Caco-2 (cell line): ENCODE measurements at regions of chr11 and their contacts with region 1.

Region 1: GRCh38 chr11:60615497-60615896 is 83.9 kb upstream of the MS4A8 start:
- DNase-seq: no peak
- H3K4me3 ChIP-seq: no peak overlapping the region
- H3K4me3 Mint-ChIP-seq: no peak overlapping the region
- H3K27ac Mint-ChIP-seq: no peak overlapping the region
- H3K4me1 ChIP-seq: no peaks in the 10 kb centered on the region
- H3K4me1 Mint-ChIP-seq: no peaks in the 10 kb centered on the region
- H3K27me3 ChIP-seq: no peaks in the 10 kb centered on the region
- H3K27me3 Mint-ChIP-seq: peaks cover 11% of the 10 kb centered on the region
- CTCF ChIP-seq: no peak

Region 2: DNA sequence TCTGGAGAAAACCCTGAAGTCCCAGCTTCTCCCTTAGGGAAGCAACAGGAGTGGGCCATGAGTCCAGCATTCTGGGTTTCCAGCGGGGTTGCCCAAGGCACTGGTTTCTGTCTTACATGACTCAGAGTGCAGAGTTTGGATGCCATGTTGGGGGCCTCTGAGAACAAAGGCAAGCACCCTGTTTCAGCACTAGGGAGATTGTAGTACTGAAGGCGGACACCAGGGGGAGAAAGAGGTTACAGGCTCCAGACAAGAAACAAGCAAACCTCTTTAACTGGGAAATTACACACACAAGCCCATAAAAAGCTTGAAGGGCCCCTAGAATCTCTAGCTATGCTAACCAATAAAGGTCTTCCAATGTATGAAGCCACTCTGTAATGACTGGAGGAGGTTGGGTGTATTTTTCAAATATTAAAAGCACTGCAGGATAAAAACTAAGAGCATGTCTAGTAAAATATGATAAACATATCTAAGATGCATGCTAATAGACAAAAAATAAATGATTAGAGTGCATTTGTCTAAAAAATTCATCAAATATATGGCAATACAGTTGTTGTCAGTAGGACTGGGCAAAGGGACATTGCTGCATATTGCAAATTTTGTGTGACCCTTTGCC is 281.4 kb before region 1 on chr11:
- CTCF ChIA-PET with region 1: interaction called, 6 read pairs
- POLR2A ChIA-PET with region 1: no interaction called
- intact Hi-C with region 1: loop called (anchors 1 kb)
- DNase-seq: peak; percentile 70 to 82
- H3K4me3 ChIP-seq: no peak overlapping the region
- H3K4me3 Mint-ChIP-seq: no peak overlapping the region
- H3K27ac Mint-ChIP-seq: no peak overlapping the region
- H3K4me1 ChIP-seq: no peaks in the 10 kb centered on the region
- H3K4me1 Mint-ChIP-seq: no peaks in the 10 kb centered on the region
- H3K27me3 ChIP-seq: no peaks in the 10 kb centered on the region
- H3K27me3 Mint-ChIP-seq: no peaks in the 10 kb centered on the region
- CTCF ChIP-seq: peak; percentile 81 to 85

Region 3: GRCh38 chr11:60345489-60345888 is 270.0 kb before region 1 on chr11:
- CTCF ChIA-PET with region 1: no interaction called
- POLR2A ChIA-PET with region 1: no interaction called
- intact Hi-C with region 1: loop called (anchors 5 kb)
- DNase-seq: peak in 1 of 2 experiments; percentile 33
- H3K4me3 ChIP-seq: no peak overlapping the region
- H3K4me3 Mint-ChIP-seq: no peak overlapping the region
- H3K27ac Mint-ChIP-seq: no peak overlapping the region
- H3K4me1 ChIP-seq: no peaks in the 10 kb centered on the region
- H3K4me1 Mint-ChIP-seq: no peaks in the 10 kb centered on the region
- H3K27me3 ChIP-seq: no peaks in the 10 kb centered on the region
- H3K27me3 Mint-ChIP-seq: no peaks in the 10 kb centered on the region
- CTCF ChIP-seq: peak; percentile 28 to 47

Region 4: DNA sequence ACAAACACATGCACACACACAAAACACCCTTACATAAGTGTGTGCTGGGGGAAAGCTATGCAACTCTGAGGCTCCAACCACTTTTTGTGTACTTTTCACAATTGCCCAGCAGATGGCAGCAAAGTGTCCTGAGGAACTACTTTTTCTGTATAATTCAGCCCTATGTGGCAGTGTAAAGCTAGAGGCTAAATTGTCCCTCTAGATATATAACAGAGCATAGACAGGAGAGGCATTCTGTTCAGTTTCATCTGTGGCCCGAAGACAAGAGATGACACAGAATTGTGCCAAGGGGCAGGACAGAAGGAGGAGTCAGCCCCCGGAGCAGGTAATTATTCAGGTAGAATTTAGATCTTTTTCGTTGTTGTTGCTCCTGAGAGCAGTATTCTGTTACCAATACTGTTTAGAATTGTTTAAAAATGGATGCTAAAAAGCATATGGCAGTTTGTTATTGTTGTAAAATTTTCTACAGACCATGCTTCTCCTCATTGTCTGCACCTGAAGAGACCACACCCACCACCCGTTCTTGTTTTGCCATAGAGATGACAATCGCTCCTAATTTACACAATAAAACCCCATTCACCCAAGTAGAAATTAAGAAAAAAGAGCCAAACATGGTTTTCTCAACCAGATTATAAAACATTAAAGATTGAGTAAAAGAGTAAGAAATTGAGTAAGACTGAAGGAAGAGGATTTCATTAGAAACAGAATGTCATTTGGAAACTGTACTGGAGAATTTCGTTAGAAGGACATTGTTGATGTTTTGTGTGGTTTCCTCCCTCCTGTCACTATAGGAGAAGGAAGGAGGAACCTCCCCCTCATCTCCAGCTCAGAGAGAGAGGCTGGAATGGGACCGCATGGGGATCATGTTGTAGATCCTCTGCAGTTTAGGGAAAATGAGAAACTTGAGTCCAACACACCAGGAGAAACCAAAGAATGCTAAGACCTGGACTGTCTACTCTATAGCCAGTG is 251.7 kb before region 1 on chr11:
- CTCF ChIA-PET with region 1: interaction called, 8 read pairs
- POLR2A ChIA-PET with region 1: no interaction called
- intact Hi-C with region 1: loop called (anchors 1 kb)
- DNase-seq: peak; percentile 55 to 74
- H3K4me3 ChIP-seq: no peak overlapping the region
- H3K4me3 Mint-ChIP-seq: no peak overlapping the region
- H3K27ac Mint-ChIP-seq: no peak overlapping the region
- H3K4me1 ChIP-seq: no peaks in the 10 kb centered on the region; the same call in 1 of the 2 replicates
- H3K4me1 Mint-ChIP-seq: no peaks in the 10 kb centered on the region
- H3K27me3 ChIP-seq: no peaks in the 10 kb centered on the region
- H3K27me3 Mint-ChIP-seq: no peaks in the 10 kb centered on the region
- CTCF ChIP-seq: peak; percentile 70 to 83

Region 5: DNA sequence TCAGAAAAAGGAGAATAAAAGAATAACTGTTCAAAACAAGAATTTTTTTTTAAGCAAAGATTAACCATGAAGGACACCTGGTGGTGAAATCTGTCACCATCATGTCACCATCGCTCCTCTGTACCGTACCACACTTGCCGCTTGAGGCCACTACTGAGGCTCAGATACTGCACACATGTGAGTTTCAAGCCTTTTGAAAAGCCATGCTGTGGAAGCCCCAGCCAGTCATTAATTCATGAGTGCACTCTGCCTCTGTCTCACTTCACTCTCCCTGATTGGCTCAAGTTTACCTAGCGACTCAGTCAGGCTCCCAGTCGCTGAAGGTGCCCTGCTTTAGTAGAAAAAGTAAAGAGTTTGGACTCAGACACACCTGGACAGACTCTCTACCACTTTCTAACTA is 129.5 kb before region 1 on chr11:
- CTCF ChIA-PET with region 1: no interaction called
- POLR2A ChIA-PET with region 1: no interaction called
- intact Hi-C with region 1: loop called (anchors 1 kb)
- DNase-seq: peak; percentile 70 to 72
- H3K4me3 ChIP-seq: no peak overlapping the region
- H3K4me3 Mint-ChIP-seq: no peak overlapping the region
- H3K27ac Mint-ChIP-seq: no peak overlapping the region
- H3K4me1 ChIP-seq: no peaks in the 10 kb centered on the region
- H3K4me1 Mint-ChIP-seq: no peaks in the 10 kb centered on the region
- H3K27me3 ChIP-seq: no peaks in the 10 kb centered on the region
- H3K27me3 Mint-ChIP-seq: peaks cover 3% of the 10 kb centered on the region
- CTCF ChIP-seq: peak; percentile 83 to 93